B cell (primary cell): ENCODE measurements at regions of chr22 and their contacts with region 1.

Region 1: DNA sequence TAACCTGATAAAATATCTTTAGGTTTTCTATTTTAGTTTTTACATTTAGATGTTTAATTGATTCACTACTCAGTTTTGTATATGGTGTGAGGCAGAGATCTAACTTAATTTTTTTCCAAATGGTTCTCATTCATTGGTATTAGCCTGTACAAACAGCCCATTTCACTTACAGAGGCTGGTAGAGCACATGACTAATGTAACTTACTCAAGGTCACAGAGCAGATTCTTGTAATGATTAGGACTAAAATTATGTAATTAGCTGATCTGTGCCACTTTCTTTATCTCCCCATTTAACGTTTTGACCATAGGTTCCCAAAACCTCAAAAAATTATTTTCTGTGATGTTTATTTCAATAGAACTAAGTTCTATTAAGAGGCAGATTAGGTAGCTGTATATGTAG is 16.5 kb upstream of the TNRC6B start:
- DNase-seq: no peak
- ATAC-seq: no peak
- H3K4me3 ChIP-seq: no peak overlapping the region
- H3K4me3 Mint-ChIP-seq: no peak overlapping the region
- H3K27ac ChIP-seq: no peak overlapping the region
- H3K27ac Mint-ChIP-seq: no peak overlapping the region
- H3K4me1 ChIP-seq: no peaks in the 10 kb centered on the region
- H3K4me1 Mint-ChIP-seq: no peaks in the 10 kb centered on the region
- H3K27me3 ChIP-seq: no peaks in the 10 kb centered on the region
- H3K27me3 Mint-ChIP-seq: no peaks in the 10 kb centered on the region
- CTCF ChIP-seq: no peak

Region 2: GRCh38 chr22:40147388-40148176 is 13.6 kb before region 1 on chr22:
- CTCF ChIA-PET with region 1: no interaction called
- POLR2A ChIA-PET with region 1: interaction called, 15 read pairs
- intact Hi-C with region 1: no loop called
- DNase-seq: no peak
- ATAC-seq: no peak
- H3K4me3 ChIP-seq: no peak overlapping the region
- H3K4me3 Mint-ChIP-seq: no peak overlapping the region
- H3K27ac ChIP-seq: no peak overlapping the region
- H3K27ac Mint-ChIP-seq: peak overlapping the region; percentile 8
- H3K4me1 ChIP-seq: no peaks in the 10 kb centered on the region
- H3K4me1 Mint-ChIP-seq: no peaks in the 10 kb centered on the region
- H3K27me3 ChIP-seq: no peaks in the 10 kb centered on the region
- H3K27me3 Mint-ChIP-seq: no peaks in the 10 kb centered on the region
- CTCF ChIP-seq: no peak